ENCODE measurements at regions of chr17 and their contacts with region 1.

Region 1: GRCh38 chr17:35764123-35764991 is 3.7 kb downstream of the C17orf50 start:
- DNase-seq: peak; percentile 92
- ATAC-seq: peak; percentile 91
- H3K4me3 ChIP-seq: peak overlapping the region; percentile 21 to 88 (median 72)
- H3K4me3 Mint-ChIP-seq: peak overlapping the region; percentile 94
- H3K27ac ChIP-seq: peak overlapping the region; percentile 15 to 30
- H3K27ac Mint-ChIP-seq: peak overlapping the region; percentile 89
- H3K4me1 ChIP-seq: peaks cover 7 to 13% of the 10 kb centered on the region in 2 donors
- H3K4me1 Mint-ChIP-seq: peaks cover 8% of the 10 kb centered on the region
- H3K27me3 ChIP-seq: no peaks in the 10 kb centered on the region
- H3K27me3 Mint-ChIP-seq: no peaks in the 10 kb centered on the region
- CTCF ChIP-seq: peak; percentile 77

Region 2: GRCh38 chr17:33914125-33914524 is 1850.2 kb before region 1 on chr17:
- CTCF ChIA-PET with region 1: no interaction called
- POLR2A ChIA-PET with region 1: no interaction called
- intact Hi-C with region 1: no loop called
- DNase-seq: no peak
- ATAC-seq: no peak
- H3K4me3 ChIP-seq: no peak overlapping the region
- H3K4me3 Mint-ChIP-seq: no peak overlapping the region
- H3K27ac ChIP-seq: no peak overlapping the region
- H3K27ac Mint-ChIP-seq: no peak overlapping the region
- H3K4me1 ChIP-seq: no peaks in the 10 kb centered on the region
- H3K4me1 Mint-ChIP-seq: no peaks in the 10 kb centered on the region
- H3K27me3 ChIP-seq: peaks cover 0 to 2% (median 0%) of the 10 kb centered on the region in 4 experiments
- H3K27me3 Mint-ChIP-seq: peaks cover 7% of the 10 kb centered on the region
- CTCF ChIP-seq: no peak

Region 3: GRCh38 chr17:34980681-34981537 is 783.4 kb before region 1 on chr17:
- CTCF ChIA-PET with region 1: no interaction called
- POLR2A ChIA-PET with region 1: no interaction called
- intact Hi-C with region 1: loop called (anchors 2 kb)
- DNase-seq: peak; percentile 88
- ATAC-seq: peak; percentile 91
- H3K4me3 ChIP-seq: peak overlapping the region; percentile 8 to 98 (median 93)
- H3K4me3 Mint-ChIP-seq: peak overlapping the region; percentile 98
- H3K27ac ChIP-seq: peak overlapping the region; percentile 95 to 99
- H3K27ac Mint-ChIP-seq: peak overlapping the region; percentile 97
- H3K4me1 ChIP-seq: peaks cover 15 to 16% of the 10 kb centered on the region in 2 donors
- H3K4me1 Mint-ChIP-seq: peaks cover 28% of the 10 kb centered on the region
- H3K27me3 ChIP-seq: no peaks in the 10 kb centered on the region
- H3K27me3 Mint-ChIP-seq: no peaks in the 10 kb centered on the region
- CTCF ChIP-seq: peak; percentile 63

Region 4: DNA sequence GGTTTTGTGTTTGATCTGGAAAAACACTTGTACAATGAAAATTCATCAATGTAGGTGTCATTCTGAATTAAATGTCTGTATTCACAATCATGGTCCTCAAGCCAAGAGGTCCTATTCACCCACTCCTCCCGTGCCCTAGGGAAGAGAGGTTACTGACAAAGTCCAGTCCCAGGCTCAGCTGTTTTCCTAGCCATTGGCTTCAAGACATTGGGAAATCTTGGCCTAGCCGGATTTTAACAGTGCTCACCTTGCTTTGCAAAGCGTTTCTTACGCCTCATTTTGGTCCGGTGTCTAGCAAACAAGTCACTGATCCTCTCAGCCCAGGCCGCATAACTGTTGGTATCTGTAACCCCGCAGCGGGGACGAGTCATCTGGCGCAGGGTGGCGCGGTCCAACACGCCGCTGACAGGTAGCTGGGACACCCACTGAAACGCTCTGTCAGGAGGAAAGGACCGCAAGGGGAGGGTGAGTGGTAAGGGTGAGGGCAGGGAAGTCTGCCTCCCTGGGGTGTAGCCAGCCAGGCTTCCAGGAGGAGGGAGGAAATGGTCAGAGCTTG is 14.4 kb after region 1 on chr17:
- CTCF ChIA-PET with region 1: interaction called, 11 read pairs
- POLR2A ChIA-PET with region 1: no interaction called
- intact Hi-C with region 1: no loop called
- DNase-seq: no peak
- ATAC-seq: no peak
- H3K4me3 ChIP-seq: no peak overlapping the region
- H3K4me3 Mint-ChIP-seq: no peak overlapping the region
- H3K27ac ChIP-seq: no peak overlapping the region
- H3K27ac Mint-ChIP-seq: no peak overlapping the region
- H3K4me1 ChIP-seq: no peaks in the 10 kb centered on the region
- H3K4me1 Mint-ChIP-seq: no peaks in the 10 kb centered on the region
- H3K27me3 ChIP-seq: peaks cover 0 to 5% (median under 1%) of the 10 kb centered on the region in 4 experiments
- H3K27me3 Mint-ChIP-seq: peaks cover 8% of the 10 kb centered on the region
- CTCF ChIP-seq: no peak

Region 5: GRCh38 chr17:35794988-35795824 is 30.8 kb after region 1 on chr17 and contains the start of gene MMP28:
- CTCF ChIA-PET with region 1: interaction called, 62 read pairs
- POLR2A ChIA-PET with region 1: interaction called, 3 read pairs
- intact Hi-C with region 1: no loop called
- DNase-seq: peak; percentile 45
- ATAC-seq: peak; percentile 76
- H3K4me3 ChIP-seq: peak within 1 kb of the TSS in 4 of 5 experiments; percentile 8 to 61 (median 56)
- H3K4me3 Mint-ChIP-seq: peak within 1 kb of the TSS; percentile 86
- H3K27ac ChIP-seq: no peak within 1 kb of the TSS
- H3K27ac Mint-ChIP-seq: peak within 1 kb of the TSS; percentile 5
- H3K4me1 ChIP-seq: peaks cover 12 to 14% of the 10 kb centered on the region in 2 donors
- H3K4me1 Mint-ChIP-seq: peaks cover 18% of the 10 kb centered on the region
- H3K27me3 ChIP-seq: peaks cover 0 to 69% (median 31%) of the 10 kb centered on the region in 4 experiments
- H3K27me3 Mint-ChIP-seq: peaks cover 41% of the 10 kb centered on the region
- CTCF ChIP-seq: no peak
- total RNA-seq, gene MMP28: 2.0 and 2.4 TPM in 2 replicates

Region 6: GRCh38 chr17:35808962-35809854 is 44.9 kb after region 1 on chr17 and contains the start of gene TAF15:
- CTCF ChIA-PET with region 1: interaction called, 349 read pairs
- POLR2A ChIA-PET with region 1: interaction called, 33 read pairs
- intact Hi-C with region 1: loop called (anchors 1 kb)
- DNase-seq: peak; percentile 98
- ATAC-seq: peak; percentile 87
- H3K4me3 ChIP-seq: peak within 1 kb of the TSS; percentile 71 to 92 (median 90)
- H3K4me3 Mint-ChIP-seq: peak within 1 kb of the TSS; percentile 92
- H3K27ac ChIP-seq: peak within 1 kb of the TSS; percentile 91 to 93
- H3K27ac Mint-ChIP-seq: peak within 1 kb of the TSS; percentile 97
- H3K4me1 ChIP-seq: peaks cover 29 to 34% of the 10 kb centered on the region in 2 donors
- H3K4me1 Mint-ChIP-seq: peaks cover 47% of the 10 kb centered on the region
- H3K27me3 ChIP-seq: no peaks in the 10 kb centered on the region
- H3K27me3 Mint-ChIP-seq: no peaks in the 10 kb centered on the region
- CTCF ChIP-seq: peak; percentile 81
- total RNA-seq, gene TAF15: 246 and 249 TPM in 2 replicates

Region 7: GRCh38 chr17:36486204-36487194 is 722.1 kb after region 1 on chr17 and contains the start of gene ZNHIT3:
- CTCF ChIA-PET with region 1: interaction called, 9 read pairs
- POLR2A ChIA-PET with region 1: no interaction called
- intact Hi-C with region 1: loop called (anchors 10 kb)
- DNase-seq: peak; percentile 93
- ATAC-seq: peak; percentile 89
- H3K4me3 ChIP-seq: peak within 1 kb of the TSS; percentile 59 to 95 (median 86)
- H3K4me3 Mint-ChIP-seq: peak within 1 kb of the TSS; percentile 99
- H3K27ac ChIP-seq: peak within 1 kb of the TSS; percentile 56 to 83
- H3K27ac Mint-ChIP-seq: peak within 1 kb of the TSS; percentile 99
- H3K4me1 ChIP-seq: peaks cover 31 to 38% of the 10 kb centered on the region in 2 donors
- H3K4me1 Mint-ChIP-seq: peaks cover 44% of the 10 kb centered on the region
- H3K27me3 ChIP-seq: peaks cover 0 to 16% (median 13%) of the 10 kb centered on the region in 4 experiments
- H3K27me3 Mint-ChIP-seq: peaks cover 10% of the 10 kb centered on the region
- CTCF ChIP-seq: no peak
- total RNA-seq, gene ZNHIT3: 50.5 and 53.3 TPM in 2 replicates